ENCODE measurements at regions of chr3 and their contacts with region 1.

Region 1: DNA sequence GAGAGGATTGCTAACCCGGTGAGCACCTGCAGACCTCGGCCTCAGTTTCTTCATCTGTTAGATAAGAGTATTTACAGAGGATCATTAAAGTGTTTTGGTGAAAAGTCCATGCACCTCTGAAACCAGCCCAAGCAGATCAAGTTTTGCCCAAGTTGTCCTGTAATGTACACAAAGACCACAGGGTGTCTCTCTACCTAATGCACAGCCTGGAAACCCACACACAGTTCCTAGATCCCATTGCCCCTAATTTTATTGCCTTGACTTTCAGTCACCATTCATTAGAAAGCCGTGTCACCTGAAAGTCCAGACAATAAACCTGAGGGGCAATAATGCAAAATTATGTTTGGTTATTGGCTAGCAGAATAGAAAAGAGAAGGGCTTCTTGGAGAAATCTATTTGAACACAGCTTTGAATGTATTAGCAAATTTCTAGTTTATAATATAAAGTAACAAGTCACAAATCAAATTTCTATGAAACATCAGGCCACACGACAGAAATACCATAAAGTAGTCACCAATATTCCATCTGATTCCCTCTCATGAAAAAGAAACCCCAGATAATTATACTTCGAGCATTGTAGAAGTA is 161.3 kb upstream of the SLC2A2 start:
- DNase-seq: peak; percentile 48
- ATAC-seq: peak; percentile 73
- H3K4me3 ChIP-seq: no peak overlapping the region
- H3K27ac ChIP-seq: no peak overlapping the region
- H3K4me1 ChIP-seq: 0 out of 2 replicates have a peak, but pooled peaks cover 1% of the 10 kb centered on the region
- H3K27me3 ChIP-seq: no peaks in the 10 kb centered on the region
- CTCF ChIP-seq: peak; percentile 60
- POLR2A ChIP-seq: no peak
- RAD21 ChIP-seq: peak; percentile 76

Region 2: GRCh38 chr3:171383206-171384018 is 195.6 kb after region 1 on chr3:
- CTCF ChIA-PET with region 1: no interaction called
- POLR2A ChIA-PET with region 1: no interaction called
- dilution Hi-C with region 1: no loop called
- in situ Hi-C with region 1: no loop called
- intact Hi-C with region 1: no loop called
- DNase-seq: peak; percentile 47
- ATAC-seq: peak; percentile 30
- H3K4me3 ChIP-seq: no peak overlapping the region
- H3K27ac ChIP-seq: peak overlapping the region; percentile 55
- H3K4me1 ChIP-seq: peaks cover 15% of the 10 kb centered on the region
- H3K27me3 ChIP-seq: no peaks in the 10 kb centered on the region
- CTCF ChIP-seq: no peak
- POLR2A ChIP-seq: no peak
- RAD21 ChIP-seq: no peak

Region 3: GRCh38 chr3:171566803-171567422 is 379.1 kb after region 1 on chr3:
- CTCF ChIA-PET with region 1: interaction called, 6 read pairs
- POLR2A ChIA-PET with region 1: no interaction called
- dilution Hi-C with region 1: no loop called
- in situ Hi-C with region 1: loop called (anchors 5 kb)
- intact Hi-C with region 1: loop called (anchors 1 kb)
- DNase-seq: peak; percentile 46
- ATAC-seq: peak; percentile 68; the same call in 1 of the 2 replicates
- H3K4me3 ChIP-seq: no peak overlapping the region
- H3K27ac ChIP-seq: no peak overlapping the region
- H3K4me1 ChIP-seq: peaks cover 3% of the 10 kb centered on the region
- H3K27me3 ChIP-seq: peaks cover 3% of the 10 kb centered on the region; the same call in 1 of the 2 replicates
- CTCF ChIP-seq: peak; percentile 83
- POLR2A ChIP-seq: no peak
- RAD21 ChIP-seq: peak; percentile 90

Measured in IMR-90 (cell line).